Breast epithelium (tissue), 4 donors: ENCODE measurements at regions of chr5 and their contacts with region 1.

Region 1: DNA sequence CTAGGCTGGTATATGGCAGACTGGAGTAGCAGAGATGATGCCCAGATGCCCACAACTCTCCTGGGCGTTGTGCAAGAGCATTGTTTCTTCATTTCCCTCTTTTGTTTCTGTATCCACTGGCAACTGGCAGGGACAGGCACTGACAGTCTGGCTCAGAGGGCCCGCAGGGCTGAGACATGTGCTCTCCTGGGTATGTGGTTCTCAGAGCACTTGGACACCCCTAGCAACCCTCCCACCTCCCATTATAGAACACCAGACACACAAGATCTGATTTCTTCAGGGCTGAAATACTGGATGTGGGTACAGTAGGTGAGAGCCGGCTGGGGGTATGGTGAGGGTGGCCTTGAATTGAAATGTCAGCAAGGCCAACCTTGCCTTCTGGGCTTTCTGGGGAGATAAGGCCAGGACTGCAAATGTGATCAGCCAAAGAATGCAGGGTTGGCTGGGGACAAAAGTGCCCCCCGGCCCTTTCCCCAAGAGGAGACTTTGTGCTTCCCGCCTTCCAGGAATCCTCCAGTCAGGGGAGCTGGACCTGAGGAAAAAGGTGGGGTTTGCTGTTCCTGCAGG is 28.6 kb upstream of the CTNNA1 start:
- DNase-seq: peak; percentile 76 to 93
- H3K4me3 ChIP-seq: peak overlapping the region in 1 of 3 donors; percentile 47
- H3K27ac ChIP-seq: peak overlapping the region; percentile 95 to 96
- H3K4me1 ChIP-seq: peaks cover 4 to 18% of the 10 kb centered on the region in 2 donors
- H3K27me3 ChIP-seq: no peaks in the 10 kb centered on the region
- CTCF ChIP-seq: no peak
- POLR2A ChIP-seq: no peak

Region 2: GRCh38 chr5:138337685-138338410 is 386.8 kb before region 1 on chr5 and contains the start of gene FAM53C:
- intact Hi-C with region 1: no loop called
- DNase-seq: peak; percentile 89 to 96
- H3K4me3 ChIP-seq: peak within 1 kb of the TSS; percentile 70 to 98 (median 90)
- H3K27ac ChIP-seq: peak within 1 kb of the TSS; percentile 98 to 99
- H3K4me1 ChIP-seq: peaks cover 0 to 13% of the 10 kb centered on the region in 2 donors
- H3K27me3 ChIP-seq: no peaks in the 10 kb centered on the region
- CTCF ChIP-seq: peak in 2 of 3 donors; percentile 29 to 36
- POLR2A ChIP-seq: peak; percentile 98
- total RNA-seq, gene FAM53C: 16.6 to 31.0 (median 23.3) TPM

Region 3: DNA sequence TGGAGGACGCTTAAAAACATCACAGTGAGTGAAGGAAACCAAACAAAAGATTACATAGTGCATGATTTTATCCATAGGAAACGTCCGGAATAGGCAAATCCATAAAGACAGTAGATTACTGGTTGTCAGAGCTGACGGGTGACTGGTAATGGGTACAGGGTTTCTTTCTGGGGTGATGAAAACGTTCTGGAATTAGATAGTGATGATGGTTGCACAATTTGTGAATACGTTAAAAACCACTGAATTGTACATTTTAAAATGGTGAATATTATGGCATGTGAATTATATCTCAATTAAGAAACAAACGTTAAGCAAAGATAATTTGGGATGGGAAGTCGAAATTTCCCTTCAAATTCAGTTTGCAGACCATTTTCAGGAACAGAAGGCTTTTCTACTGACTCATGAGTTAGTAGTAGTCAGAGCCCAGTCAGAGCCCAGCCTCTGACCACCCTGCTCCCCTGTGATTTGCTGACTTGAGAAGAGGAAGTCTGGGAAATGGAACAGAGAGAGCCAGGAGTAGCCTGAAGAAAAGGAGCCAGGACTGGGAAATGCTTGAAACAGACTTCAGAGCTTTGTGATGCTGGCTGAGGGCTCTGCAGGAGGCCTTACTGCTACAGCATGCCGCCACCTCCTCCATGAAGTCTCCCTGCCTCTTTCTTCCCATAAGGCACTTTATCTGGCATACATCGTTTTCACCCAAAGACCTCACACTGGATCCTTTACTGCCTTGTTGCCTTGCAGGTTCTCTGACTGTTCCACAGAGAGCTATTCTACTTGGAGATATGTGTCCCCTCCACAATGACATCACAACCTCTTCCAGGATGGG is 17.7 kb before region 1 on chr5:
- intact Hi-C with region 1: loop called (anchors 1 kb)
- DNase-seq: no peak
- H3K4me3 ChIP-seq: no peak overlapping the region
- H3K27ac ChIP-seq: no peak overlapping the region
- H3K4me1 ChIP-seq: no peaks in the 10 kb centered on the region
- H3K27me3 ChIP-seq: no peaks in the 10 kb centered on the region
- CTCF ChIP-seq: no peak
- POLR2A ChIP-seq: no peak